ENCODE measurements at regions of chr10 and their contacts with region 1.

Region 1: GRCh38 chr10:31031558-31032257 is at the start of gene ZNF438:
- DNase-seq: peak; percentile 96 to 98 (median 96)
- ATAC-seq: peak; percentile 89 to 98 (median 94)
- H3K4me3 ChIP-seq: peak within 1 kb of the TSS; percentile 44 to 81 (median 70)
- H3K27ac ChIP-seq: peak within 1 kb of the TSS; percentile 97 to 100 (median 99)
- H3K4me1 ChIP-seq: peaks cover 0 to 58% (median 29%) of the 10 kb centered on the region in 12 donors
- H3K27me3 ChIP-seq: no peaks in the 10 kb centered on the region
- CTCF ChIP-seq: peak; percentile 39 to 85 (median 68)
- POLR2A ChIP-seq: peak in 1 of 2 donors; percentile 79
- total RNA-seq, gene ZNF438: 11.1 to 14.7 (median 13.2) TPM

Region 2: DNA sequence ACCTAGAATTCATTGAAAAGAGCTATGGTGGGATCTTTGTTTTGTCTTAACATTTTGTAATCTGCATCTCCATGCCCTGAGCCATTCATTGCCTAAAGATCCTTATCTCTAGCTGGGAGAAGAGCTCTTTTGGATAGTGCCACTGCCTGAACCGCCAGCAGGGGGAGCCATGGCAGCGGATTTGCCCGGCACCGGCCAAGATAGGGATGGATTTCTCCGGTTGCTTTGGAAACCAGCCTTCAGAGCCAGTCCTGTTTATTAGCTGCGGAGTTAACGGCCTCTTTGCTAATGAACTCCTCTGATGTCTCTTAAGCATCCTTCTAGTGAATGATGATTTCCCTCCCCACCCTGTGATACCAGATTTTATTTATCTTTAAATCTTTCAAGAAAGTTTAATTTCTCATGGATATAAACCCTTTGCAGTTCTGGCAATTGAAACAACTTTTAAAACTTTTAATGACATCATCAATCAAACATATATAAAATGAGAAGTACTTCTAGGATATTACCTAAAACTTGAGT is 343.9 kb before region 1 on chr10:
- intact Hi-C with region 1: no loop called
- DNase-seq: peak; percentile 54 to 83 (median 62)
- ATAC-seq: peak in 3 of 4 donors; percentile 71 to 76 (median 74)
- H3K4me3 ChIP-seq: no peak overlapping the region
- H3K27ac ChIP-seq: no peak overlapping the region
- H3K4me1 ChIP-seq: peaks cover 0 to 3% (median 0%) of the 10 kb centered on the region in 12 donors
- H3K27me3 ChIP-seq: peaks cover 0 to 24% (median 0%) of the 10 kb centered on the region in 9 donors
- CTCF ChIP-seq: peak; percentile 63 to 95 (median 83)
- POLR2A ChIP-seq: no peak

Region 3: DNA sequence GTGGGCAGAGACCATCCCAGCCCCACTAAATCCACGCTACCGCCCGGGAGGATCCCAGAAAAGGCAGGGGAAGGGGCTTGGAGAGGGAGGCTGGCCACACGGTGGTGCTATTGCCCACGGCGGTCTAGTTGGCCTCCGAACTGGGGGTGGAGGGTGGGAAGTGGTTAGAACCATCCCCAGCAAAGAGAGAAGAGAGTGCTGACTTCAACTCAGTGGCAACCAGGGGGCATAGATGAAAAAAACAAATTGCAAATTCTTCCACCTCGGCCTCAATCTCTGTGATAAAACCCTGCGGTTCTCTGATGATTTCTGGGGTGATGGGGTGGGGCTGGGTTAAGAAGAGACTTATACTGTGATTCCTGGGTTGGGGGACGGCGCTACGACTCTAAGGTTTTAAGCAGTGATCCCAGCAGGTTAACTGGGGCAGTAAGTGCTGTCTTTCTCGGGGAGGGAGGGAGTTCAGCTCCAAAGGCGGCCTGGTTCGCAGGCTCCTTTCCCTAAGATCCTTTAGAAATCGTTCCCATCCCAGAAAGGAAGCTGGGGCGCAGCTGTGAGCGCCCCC is 247.7 kb before region 1 on chr10:
- intact Hi-C with region 1: loop called (anchors 1 to 10 kb)
- DNase-seq: peak; percentile 88 to 93 (median 90)
- ATAC-seq: peak; percentile 80 to 86 (median 80)
- H3K4me3 ChIP-seq: peak overlapping the region; percentile 61 to 89 (median 76)
- H3K27ac ChIP-seq: peak overlapping the region; percentile 91 to 99 (median 98)
- H3K4me1 ChIP-seq: peaks cover 0 to 46% (median 18%) of the 10 kb centered on the region in 12 donors
- H3K27me3 ChIP-seq: no peaks in the 10 kb centered on the region
- CTCF ChIP-seq: peak; percentile 75 to 89 (median 86)
- POLR2A ChIP-seq: no peak

Region 4: GRCh38 chr10:30902621-30903396 is 128.9 kb before region 1 on chr10:
- intact Hi-C with region 1: no loop called
- DNase-seq: no peak
- ATAC-seq: no peak
- H3K4me3 ChIP-seq: no peak overlapping the region
- H3K27ac ChIP-seq: no peak overlapping the region
- H3K4me1 ChIP-seq: peaks cover 0 to 15% (median 0%) of the 10 kb centered on the region in 12 donors
- H3K27me3 ChIP-seq: no peaks in the 10 kb centered on the region
- CTCF ChIP-seq: no peak
- POLR2A ChIP-seq: no peak

Region 5: GRCh38 chr10:30980951-30981616 is 50.6 kb before region 1 on chr10:
- intact Hi-C with region 1: loop called in 2 of 10 experiments (anchors 5 kb)
- DNase-seq: peak in 4 of 5 donors; percentile 75 to 81 (median 78)
- ATAC-seq: peak; percentile 96 to 97 (median 97)
- H3K4me3 ChIP-seq: no peak overlapping the region
- H3K27ac ChIP-seq: peak overlapping the region in 11 of 12 donors; percentile 28 to 70 (median 61)
- H3K4me1 ChIP-seq: peaks cover 0 to 43% (median 26%) of the 10 kb centered on the region in 12 donors
- H3K27me3 ChIP-seq: no peaks in the 10 kb centered on the region
- CTCF ChIP-seq: no peak
- POLR2A ChIP-seq: no peak

Region 6: DNA sequence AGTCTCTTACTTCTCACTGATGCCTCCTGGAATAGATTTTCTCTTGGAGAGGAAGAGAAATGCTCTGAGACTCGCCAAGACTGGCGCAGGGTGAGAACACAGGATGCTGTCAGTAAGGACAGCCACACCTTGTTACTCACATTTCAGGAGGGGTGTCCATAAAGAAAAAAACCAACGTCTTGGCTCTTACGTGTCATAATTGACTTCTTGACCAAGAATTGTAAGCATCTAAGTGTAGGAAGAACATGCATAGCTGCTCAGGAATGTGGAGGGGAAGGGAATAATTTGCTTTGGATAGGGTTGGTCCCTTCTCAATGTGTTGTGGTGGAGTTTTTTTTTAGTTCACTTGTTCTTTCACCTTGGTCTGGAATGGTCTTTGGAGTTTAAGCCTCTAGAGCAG is 43.7 kb after region 1 on chr10:
- intact Hi-C with region 1: loop called in 2 of 10 experiments (anchors 5 kb)
- DNase-seq: no peak
- ATAC-seq: peak in 3 of 4 donors; percentile 35 to 37 (median 36)
- H3K4me3 ChIP-seq: no peak overlapping the region
- H3K27ac ChIP-seq: peak overlapping the region in 5 of 12 donors; percentile 16 to 56 (median 38)
- H3K4me1 ChIP-seq: peaks cover 0 to 49% (median 7%) of the 10 kb centered on the region in 12 donors
- H3K27me3 ChIP-seq: no peaks in the 10 kb centered on the region
- CTCF ChIP-seq: no peak
- POLR2A ChIP-seq: no peak

Region 7: DNA sequence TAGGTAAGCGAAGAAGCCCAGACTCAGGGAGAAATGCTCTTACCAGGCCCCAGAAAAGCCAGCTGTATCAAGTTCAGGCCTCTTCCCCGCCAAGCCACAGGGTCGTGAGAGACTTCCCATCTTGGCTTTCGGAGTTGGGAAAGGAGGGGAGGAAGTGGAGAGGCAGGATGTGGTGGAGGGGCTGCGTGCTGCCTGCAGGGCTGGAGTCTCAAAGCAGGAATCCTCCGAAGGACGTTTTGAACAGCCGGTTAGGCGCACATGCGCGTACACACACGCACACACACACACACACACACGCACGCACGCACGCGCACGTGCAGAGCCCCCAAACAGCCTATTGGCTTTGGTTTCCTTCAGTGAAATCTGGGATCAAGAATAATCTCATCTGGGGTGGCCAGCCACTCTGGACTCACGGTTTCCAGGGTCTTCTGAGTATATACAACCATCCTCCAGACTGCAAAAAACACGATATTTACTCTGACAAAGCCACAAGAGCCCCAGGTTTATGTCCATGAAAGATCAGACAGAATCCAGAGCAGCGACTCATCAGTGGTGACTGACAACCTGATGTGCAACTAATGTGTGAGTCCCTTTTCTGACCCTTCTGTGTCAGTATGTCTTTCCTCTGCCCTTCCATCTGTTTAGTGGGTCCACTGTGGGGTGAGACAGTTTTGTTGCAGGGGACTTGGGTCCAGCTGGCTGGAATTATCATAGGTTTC is 114.9 kb after region 1 on chr10:
- intact Hi-C with region 1: loop called in 1 of 10 experiments (anchors 5 kb)
- DNase-seq: peak; percentile 74 to 82 (median 79)
- ATAC-seq: peak; percentile 69 to 89 (median 78)
- H3K4me3 ChIP-seq: peak overlapping the region in 4 of 12 donors; percentile 4 to 31 (median 6)
- H3K27ac ChIP-seq: peak overlapping the region in 11 of 12 donors; percentile 20 to 82 (median 68)
- H3K4me1 ChIP-seq: peaks cover 0 to 41% (median 18%) of the 10 kb centered on the region in 12 donors
- H3K27me3 ChIP-seq: no peaks in the 10 kb centered on the region
- CTCF ChIP-seq: no peak
- POLR2A ChIP-seq: no peak

Region 8: GRCh38 chr10:31490858-31491504 is 459.3 kb after region 1 on chr10:
- intact Hi-C with region 1: loop called in 1 of 10 experiments (anchors 5 kb)
- DNase-seq: no peak
- ATAC-seq: peak in 3 of 4 donors; percentile 53 to 73 (median 53)
- H3K4me3 ChIP-seq: no peak overlapping the region
- H3K27ac ChIP-seq: no peak overlapping the region
- H3K4me1 ChIP-seq: peaks cover 0 to 4% (median 0%) of the 10 kb centered on the region in 12 donors
- H3K27me3 ChIP-seq: no peaks in the 10 kb centered on the region
- CTCF ChIP-seq: peak; percentile 38 to 70 (median 57)
- POLR2A ChIP-seq: no peak

Region 9: DNA sequence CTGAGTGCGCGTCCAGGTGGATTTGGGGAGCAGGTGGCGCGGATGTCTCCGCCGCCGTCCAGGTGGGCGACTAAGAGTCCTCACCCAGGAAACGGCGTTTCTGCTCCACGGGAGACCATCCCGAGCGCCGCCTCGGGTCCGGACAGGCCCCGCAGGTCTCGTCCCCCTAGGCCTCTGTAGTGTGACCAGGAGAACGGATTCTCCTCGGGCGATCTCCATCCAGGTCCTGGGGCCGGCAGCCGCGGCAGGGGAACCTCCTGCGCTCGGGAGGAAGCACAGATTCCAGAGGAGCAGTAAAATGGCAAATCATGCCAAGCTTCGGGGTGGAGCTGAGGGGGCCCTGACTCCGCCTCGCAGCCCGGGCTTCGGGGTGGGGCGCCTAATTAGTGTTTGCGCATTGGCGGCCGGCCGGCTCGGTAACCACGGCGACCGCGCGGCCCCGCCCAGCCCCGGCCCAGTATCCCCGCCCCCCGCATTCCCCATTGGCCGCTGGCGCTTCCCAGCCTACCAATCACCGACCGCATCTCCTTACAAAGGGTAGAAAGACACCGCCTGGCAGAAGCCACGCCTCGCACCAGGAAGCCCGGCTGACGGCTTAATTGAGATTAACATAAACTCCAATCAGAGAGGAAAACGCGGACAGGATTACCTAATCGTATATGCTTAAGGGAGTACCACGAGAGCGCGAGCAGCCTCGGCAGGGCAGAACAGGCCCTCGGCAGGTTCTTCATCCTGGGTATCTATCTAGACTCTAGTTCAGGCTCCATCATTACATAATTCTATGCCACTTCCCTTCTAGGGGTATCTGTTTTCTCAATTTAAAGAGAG is 728.3 kb after region 1 on chr10:
- intact Hi-C with region 1: loop called in 1 of 10 experiments (anchors 5 kb)
- DNase-seq: peak; percentile 96 to 97 (median 97)
- ATAC-seq: peak; percentile 95 to 97 (median 97)
- H3K4me3 ChIP-seq: peak overlapping the region; percentile 68 to 98 (median 92)
- H3K27ac ChIP-seq: peak overlapping the region; percentile 91 to 100 (median 98)
- H3K4me1 ChIP-seq: peaks cover 0 to 44% (median 25%) of the 10 kb centered on the region in 12 donors
- H3K27me3 ChIP-seq: no peaks in the 10 kb centered on the region
- CTCF ChIP-seq: no peak
- POLR2A ChIP-seq: peak; percentile 78 to 96

Measured in heart left ventricle (tissue), 16 donors.